ENCODE measurements at regions of chr1 and their contacts with region 1.

Region 1: DNA sequence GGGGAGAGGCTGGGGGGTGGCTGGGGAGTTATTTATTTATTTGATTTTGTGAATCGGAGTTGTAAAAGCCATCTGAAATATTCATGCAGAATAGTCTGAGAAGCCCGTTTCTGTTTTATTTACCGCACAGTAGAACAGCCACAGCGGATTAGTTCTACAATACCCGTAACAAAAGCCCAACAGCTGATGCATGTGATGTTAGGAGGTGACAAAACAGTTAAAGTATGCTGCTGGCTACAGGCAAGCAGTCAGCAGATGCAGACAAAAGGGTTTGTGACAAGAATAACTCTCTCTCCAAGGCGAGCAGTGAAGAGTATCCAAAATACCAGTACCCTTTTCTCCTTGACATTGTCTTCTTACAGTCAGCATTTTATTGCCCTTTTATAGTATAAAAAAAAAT is 42.0 kb downstream of the PROX1 start:
- DNase-seq: no peak
- ATAC-seq: peak; percentile 81 to 86

Region 2: GRCh38 chr1:213993929-213994328 is 35.9 kb before region 1 on chr1:
- intact Hi-C with region 1: loop called in 1 of 2 experiments (anchors 5 kb)
- DNase-seq: no peak
- ATAC-seq: no peak

Region 3: DNA sequence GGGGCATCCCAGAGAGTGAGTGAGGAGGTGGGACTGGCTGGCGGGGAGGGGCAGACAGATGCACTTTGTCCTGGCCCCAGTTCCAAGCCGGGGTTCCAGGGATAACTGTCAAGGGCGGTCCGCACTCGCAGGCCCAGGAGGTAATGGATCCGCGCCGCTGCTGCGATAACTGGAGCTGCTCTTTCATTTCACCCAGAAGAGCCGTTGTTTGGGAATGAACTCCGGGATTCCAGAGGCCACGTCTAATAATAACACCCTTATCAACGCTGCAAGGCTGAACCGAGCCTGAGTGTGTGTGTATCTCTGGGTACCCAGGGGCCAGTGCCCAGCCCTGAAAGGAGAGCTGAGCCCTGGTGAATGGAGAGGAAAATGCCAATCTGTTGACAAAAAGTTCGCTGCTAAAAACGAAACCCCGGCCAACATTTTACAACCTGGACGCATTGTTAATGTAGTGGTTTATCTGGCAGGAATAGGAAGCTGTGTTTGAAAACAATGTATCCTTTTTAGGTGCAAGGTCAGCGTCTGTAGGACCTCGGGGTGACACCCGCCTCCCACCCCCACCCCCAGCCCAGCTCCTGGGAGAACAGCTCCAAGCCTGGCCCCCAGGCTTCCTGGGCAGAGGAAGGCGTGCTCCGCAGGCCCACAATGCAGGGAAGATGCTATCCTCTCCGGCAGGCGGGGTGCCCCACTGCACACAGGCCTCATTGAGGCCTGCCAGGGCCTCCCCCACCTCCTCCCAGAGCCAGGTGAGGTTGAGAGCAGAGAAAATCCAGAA is 77.7 kb after region 1 on chr1:
- intact Hi-C with region 1: loop called in 1 of 2 experiments (anchors 5 kb)
- DNase-seq: peak; percentile 48
- ATAC-seq: peak; percentile 93